Naive thymus-derived CD4-positive, alpha-beta T cell (primary cell): ENCODE measurements at regions of chr3 and their contacts with region 1.

Region 1: GRCh38 chr3:170908235-170909116 is at the start of gene EIF5A2:
- DNase-seq: peak; percentile 87 to 97 (median 94)
- ATAC-seq: peak; percentile 98
- H3K4me3 ChIP-seq: peak within 1 kb of the TSS; percentile 50
- H3K4me3 Mint-ChIP-seq: peak within 1 kb of the TSS; percentile 90 to 98 (median 96)
- H3K27ac ChIP-seq: peak within 1 kb of the TSS; percentile 68
- H3K27ac Mint-ChIP-seq: peak within 1 kb of the TSS; percentile 89 to 96 (median 94)
- H3K4me1 ChIP-seq: peaks cover 15 to 16% of the 10 kb centered on the region in 2 donors
- H3K4me1 Mint-ChIP-seq: peaks cover 0 to 31% (median 22%) of the 10 kb centered on the region in 7 donors
- H3K27me3 ChIP-seq: no peaks in the 10 kb centered on the region
- H3K27me3 Mint-ChIP-seq: peaks cover 0 to 19% (median 0%) of the 10 kb centered on the region in 5 donors
- total RNA-seq, gene EIF5A2: 5.5 to 9.8 (median 7.4) TPM

Region 2: DNA sequence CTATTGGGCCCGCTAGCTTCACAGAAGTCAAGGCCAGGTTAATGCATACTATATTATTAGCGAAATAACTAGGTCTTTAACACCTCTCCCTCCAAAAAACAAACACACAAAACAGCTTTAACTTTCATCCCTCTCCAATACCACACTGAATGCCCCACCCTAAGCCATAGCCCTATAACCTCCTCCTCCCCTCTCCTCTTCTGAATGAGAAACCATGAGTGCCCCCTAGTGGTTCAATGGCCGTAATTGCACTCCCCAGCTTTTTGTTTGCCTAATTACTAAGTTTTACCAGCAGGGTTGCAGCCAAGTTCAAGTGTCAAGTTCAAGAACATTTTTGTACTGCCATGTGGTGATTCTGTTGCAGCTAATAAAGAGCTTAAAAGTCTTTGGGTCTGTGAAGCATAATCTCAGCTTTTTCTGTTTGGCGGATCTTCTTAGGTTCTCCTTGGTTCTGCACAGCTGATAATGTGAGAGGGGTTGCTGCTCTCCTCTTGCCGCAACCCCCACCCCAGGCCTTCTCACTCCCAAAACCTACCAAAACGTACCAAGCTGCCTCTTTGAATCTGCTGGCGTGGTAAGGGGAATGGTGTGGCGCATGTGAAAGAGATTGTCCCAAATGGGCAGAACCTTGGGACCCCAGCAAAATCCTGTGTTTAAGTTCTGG is 96.4 kb before region 1 on chr3:
- CTCF ChIA-PET with region 1: no interaction called
- POLR2A ChIA-PET with region 1: no interaction called
- intact Hi-C with region 1: loop called in 1 of 2 experiments (anchors 5 kb)
- DNase-seq: peak; percentile 17 to 77 (median 68)
- ATAC-seq: peak; percentile 92
- H3K4me3 ChIP-seq: no peak overlapping the region
- H3K4me3 Mint-ChIP-seq: no peak overlapping the region
- H3K27ac ChIP-seq: no peak overlapping the region
- H3K27ac Mint-ChIP-seq: no peak overlapping the region
- H3K4me1 ChIP-seq: no peaks in the 10 kb centered on the region
- H3K4me1 Mint-ChIP-seq: peaks cover 0 to 8% (median 0%) of the 10 kb centered on the region in 7 donors
- H3K27me3 ChIP-seq: no peaks in the 10 kb centered on the region
- H3K27me3 Mint-ChIP-seq: peaks cover 0 to 6% (median 0%) of the 10 kb centered on the region in 5 donors